ENCODE measurements at regions of chr18 and their contacts with region 1.

Region 1: DNA sequence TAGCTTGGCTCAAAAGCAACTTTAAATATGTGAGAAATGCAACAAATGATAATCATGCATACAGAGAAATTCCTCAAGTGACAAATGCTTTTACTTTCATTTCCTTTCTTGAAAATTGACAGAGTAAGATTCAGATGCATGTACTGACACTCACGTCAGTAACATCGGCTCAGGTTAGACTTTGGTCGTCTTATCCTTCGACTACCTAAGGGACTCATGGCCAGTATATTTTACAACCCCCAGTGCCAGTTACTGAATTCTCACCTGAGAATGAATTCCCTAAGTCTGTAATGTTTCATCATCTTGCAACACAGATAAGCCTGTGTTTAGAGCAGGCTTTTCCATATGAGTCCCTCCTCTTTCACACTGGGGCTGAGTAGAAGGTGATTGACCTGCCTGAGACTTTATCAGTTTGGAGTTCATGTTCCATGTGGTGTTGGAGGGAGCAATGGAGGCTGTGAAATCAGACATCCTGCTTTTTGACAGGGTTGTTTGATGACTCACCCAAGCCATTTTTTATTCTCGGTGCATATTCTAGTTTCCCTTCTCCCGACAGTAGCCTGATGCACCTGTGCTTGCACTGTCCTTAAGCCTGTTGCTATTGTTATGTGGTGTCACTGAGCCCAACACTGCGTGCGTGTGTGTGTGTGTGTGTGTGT is 30.5 kb upstream of the ATP8B1 start:
- DNase-seq: peak; percentile 56
- ATAC-seq: peak; percentile 49
- H3K4me3 Mint-ChIP-seq: peak overlapping the region; percentile 30
- H3K27ac Mint-ChIP-seq: peak overlapping the region; percentile 59
- H3K4me1 Mint-ChIP-seq: peaks cover 26% of the 10 kb centered on the region
- H3K27me3 Mint-ChIP-seq: peaks cover 29% of the 10 kb centered on the region

Region 2: GRCh38 chr18:57004366-57005121 is 829.0 kb before region 1 on chr18:
- CTCF ChIA-PET with region 1: no interaction called
- POLR2A ChIA-PET with region 1: no interaction called
- intact Hi-C with region 1: loop called in 1 of 2 experiments (anchors 10 kb)
- DNase-seq: no peak
- ATAC-seq: peak; percentile 96
- H3K4me3 Mint-ChIP-seq: no peak overlapping the region
- H3K27ac Mint-ChIP-seq: peak overlapping the region; percentile 77
- H3K4me1 Mint-ChIP-seq: peaks cover 34% of the 10 kb centered on the region
- H3K27me3 Mint-ChIP-seq: no peaks in the 10 kb centered on the region

Region 3: DNA sequence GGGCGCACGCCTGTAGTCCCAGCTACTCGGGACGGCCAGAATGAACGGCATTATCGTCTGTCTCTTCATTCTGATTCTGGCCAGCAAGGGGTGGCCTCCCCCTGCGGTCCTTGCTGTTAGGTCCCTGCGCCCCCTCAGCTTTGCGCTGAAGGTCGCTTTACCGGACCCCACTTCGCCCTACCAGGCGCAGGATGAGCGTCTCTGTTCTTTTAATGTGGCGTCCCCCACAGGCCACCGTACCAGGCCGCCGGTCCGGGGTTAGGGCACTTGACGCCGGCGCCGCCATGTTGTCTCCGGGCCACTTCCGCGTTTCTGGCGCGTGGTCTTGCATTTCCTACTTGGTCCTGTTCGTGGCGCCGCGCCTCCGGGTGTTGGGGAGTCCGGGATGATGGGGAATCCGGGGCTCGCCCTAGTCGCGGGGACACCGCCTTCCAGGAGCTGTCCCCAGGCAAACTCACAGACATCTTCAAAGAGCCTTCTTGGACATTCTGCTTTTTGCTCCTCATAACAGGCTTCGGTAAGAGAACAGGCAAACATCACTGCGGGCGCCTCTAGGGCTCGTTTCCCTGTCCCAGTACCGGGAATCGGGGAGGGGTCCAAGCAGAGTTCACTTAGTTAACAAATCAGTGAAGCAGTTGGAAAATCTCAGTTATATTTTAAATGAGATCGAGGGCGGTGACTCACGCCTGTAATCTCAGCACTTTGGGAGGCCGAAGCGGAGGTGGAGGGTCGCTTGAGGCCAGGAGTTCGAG is 203.4 kb before region 1 on chr18:
- CTCF ChIA-PET with region 1: interaction called, 6 read pairs
- POLR2A ChIA-PET with region 1: interaction called, 6 read pairs
- intact Hi-C with region 1: loop called (anchors 1 kb)
- DNase-seq: peak; percentile 97
- ATAC-seq: peak; percentile 99
- H3K4me3 Mint-ChIP-seq: peak overlapping the region; percentile 97
- H3K27ac Mint-ChIP-seq: peak overlapping the region; percentile 96
- H3K4me1 Mint-ChIP-seq: peaks cover 11% of the 10 kb centered on the region
- H3K27me3 Mint-ChIP-seq: no peaks in the 10 kb centered on the region

Region 4: GRCh38 chr18:58268849-58269248 is 435.3 kb after region 1 on chr18:
- CTCF ChIA-PET with region 1: no interaction called
- POLR2A ChIA-PET with region 1: no interaction called
- intact Hi-C with region 1: no loop called
- DNase-seq: no peak
- ATAC-seq: no peak
- H3K4me3 Mint-ChIP-seq: no peak overlapping the region
- H3K27ac Mint-ChIP-seq: no peak overlapping the region
- H3K4me1 Mint-ChIP-seq: peaks cover 11% of the 10 kb centered on the region
- H3K27me3 Mint-ChIP-seq: no peaks in the 10 kb centered on the region

Region 5: DNA sequence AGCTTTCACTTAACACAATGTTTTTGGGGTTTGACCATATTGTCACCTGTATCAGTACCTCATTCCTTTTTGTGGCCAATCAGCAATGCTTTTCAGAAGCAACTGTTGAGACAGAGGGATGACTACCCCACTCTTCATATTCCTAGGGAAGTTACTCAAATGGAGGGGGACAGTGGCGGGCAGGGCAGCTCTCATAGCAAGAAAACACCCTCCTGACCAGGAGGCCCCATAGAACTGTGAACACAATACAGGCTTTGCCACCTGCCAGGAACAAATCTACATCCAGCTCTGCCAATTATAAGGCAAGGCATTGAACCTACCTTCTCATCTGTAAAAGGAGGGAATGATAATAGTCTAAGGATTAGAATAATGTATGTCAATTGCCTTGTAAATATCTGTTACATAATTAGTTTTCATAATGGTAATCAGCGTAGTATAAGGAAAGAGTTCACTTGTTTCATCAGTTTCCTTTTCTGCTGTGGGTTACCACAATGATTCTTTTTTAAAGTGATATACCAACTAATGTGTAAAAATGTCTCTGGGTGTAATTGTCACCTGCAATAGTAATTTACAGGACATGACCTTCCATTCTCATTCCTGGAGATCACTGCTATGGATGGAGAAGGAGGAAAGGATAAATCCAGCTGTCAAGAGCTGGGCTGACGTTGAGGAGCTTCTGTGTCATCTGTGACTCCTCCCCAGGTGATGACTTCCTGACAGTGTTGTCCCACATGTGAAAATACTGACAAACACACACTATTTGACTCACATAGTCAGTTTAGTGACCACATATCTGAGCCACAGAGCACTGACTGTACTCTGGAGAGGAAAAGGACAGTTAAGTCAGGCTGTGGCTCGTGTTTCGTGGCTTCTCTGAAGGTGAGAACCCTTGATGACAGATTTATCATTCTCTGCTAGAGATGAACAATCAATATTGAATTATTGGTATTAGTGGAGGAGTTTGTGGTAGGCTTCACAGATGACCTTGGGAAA is 781.9 kb after region 1 on chr18:
- CTCF ChIA-PET with region 1: no interaction called
- POLR2A ChIA-PET with region 1: no interaction called
- intact Hi-C with region 1: loop called in 1 of 2 experiments (anchors 10 kb)
- DNase-seq: peak; percentile 87
- ATAC-seq: peak; percentile 95
- H3K4me3 Mint-ChIP-seq: peak overlapping the region; percentile 30
- H3K27ac Mint-ChIP-seq: peak overlapping the region; percentile 91
- H3K4me1 Mint-ChIP-seq: peaks cover 46% of the 10 kb centered on the region
- H3K27me3 Mint-ChIP-seq: peaks cover 8% of the 10 kb centered on the region

Region 6: GRCh38 chr18:58699551-58699950 is 866.0 kb after region 1 on chr18:
- CTCF ChIA-PET with region 1: no interaction called
- POLR2A ChIA-PET with region 1: no interaction called
- intact Hi-C with region 1: loop called in 1 of 2 experiments (anchors 10 kb)
- DNase-seq: peak; percentile 39
- ATAC-seq: no peak
- H3K4me3 Mint-ChIP-seq: no peak overlapping the region
- H3K27ac Mint-ChIP-seq: no peak overlapping the region
- H3K4me1 Mint-ChIP-seq: peaks cover 33% of the 10 kb centered on the region
- H3K27me3 Mint-ChIP-seq: no peaks in the 10 kb centered on the region

Region 7: DNA sequence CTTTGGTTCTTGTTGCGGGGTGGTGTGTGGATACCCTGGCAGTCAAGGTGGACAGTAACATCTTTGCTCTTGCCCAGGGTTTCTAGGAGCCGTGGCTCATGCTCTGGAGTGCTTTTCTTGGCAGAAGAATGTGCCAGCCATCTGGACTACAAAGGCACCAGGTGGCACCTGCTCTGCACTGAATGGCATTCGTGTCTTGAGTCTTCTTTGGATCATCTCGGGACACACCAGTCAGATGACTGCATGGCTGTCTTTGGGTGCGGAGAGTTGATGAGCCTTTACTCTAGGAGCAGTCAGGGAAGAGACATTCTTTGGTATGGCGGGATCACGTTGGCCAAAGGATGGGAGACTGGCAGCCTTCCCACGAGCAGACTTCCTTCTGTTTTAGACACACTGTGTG is 1202.0 kb after region 1 on chr18:
- CTCF ChIA-PET with region 1: no interaction called
- POLR2A ChIA-PET with region 1: no interaction called
- intact Hi-C with region 1: loop called in 1 of 2 experiments (anchors 5 kb)
- DNase-seq: no peak
- ATAC-seq: no peak
- H3K4me3 Mint-ChIP-seq: no peak overlapping the region
- H3K27ac Mint-ChIP-seq: no peak overlapping the region
- H3K4me1 Mint-ChIP-seq: peaks cover 20% of the 10 kb centered on the region
- H3K27me3 Mint-ChIP-seq: peaks cover 9% of the 10 kb centered on the region

Measured in activated CD4-positive, alpha-beta T cell treated with anti-CD3 and anti-CD28 coated beads for 36 hours (primary cell).